Heart right ventricle (tissue), 16 donors: ENCODE measurements at regions of chr17 and their contacts with region 1.

Region 1: DNA sequence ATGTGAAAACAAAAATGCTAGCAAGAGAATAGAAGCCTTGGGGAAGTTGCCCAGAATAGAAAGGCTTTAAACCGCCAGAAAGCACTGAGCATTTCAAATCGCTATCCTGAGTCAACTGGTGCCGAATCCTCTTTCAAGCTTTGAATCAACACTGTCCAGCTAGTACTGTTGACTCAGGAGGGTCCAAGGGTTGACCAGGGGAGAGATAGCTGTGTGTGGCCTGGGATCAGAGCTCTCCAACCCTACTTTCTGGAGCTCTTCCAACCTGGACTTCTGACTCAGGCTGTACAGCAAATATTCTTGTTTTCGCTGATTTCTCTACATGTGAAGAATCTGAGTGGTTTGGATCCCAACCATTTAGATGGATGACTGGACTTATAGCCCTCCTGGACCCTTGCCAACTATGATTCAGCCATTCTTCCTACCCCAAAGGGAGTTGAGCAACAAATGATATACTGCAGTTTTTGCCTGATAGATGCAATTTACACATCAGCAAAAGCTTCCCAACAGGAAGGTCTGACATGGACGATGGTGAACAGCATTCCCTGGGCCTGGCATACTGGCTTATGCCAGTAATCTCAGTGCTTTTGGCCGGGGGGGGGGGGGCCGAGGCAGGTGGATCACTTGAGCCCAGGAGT is 154.0 kb upstream of the SDK2 start:
- DNase-seq: no peak
- ATAC-seq: peak in 1 of 8 donors; percentile 65
- H3K4me3 ChIP-seq: no peak overlapping the region
- H3K27ac ChIP-seq: no peak overlapping the region
- H3K4me1 ChIP-seq: peaks cover 0 to 28% (median 10%) of the 10 kb centered on the region in 9 donors
- H3K27me3 ChIP-seq: peaks cover 0 to 11% (median 0%) of the 10 kb centered on the region in 7 donors
- CTCF ChIP-seq: no peak

Region 2: DNA sequence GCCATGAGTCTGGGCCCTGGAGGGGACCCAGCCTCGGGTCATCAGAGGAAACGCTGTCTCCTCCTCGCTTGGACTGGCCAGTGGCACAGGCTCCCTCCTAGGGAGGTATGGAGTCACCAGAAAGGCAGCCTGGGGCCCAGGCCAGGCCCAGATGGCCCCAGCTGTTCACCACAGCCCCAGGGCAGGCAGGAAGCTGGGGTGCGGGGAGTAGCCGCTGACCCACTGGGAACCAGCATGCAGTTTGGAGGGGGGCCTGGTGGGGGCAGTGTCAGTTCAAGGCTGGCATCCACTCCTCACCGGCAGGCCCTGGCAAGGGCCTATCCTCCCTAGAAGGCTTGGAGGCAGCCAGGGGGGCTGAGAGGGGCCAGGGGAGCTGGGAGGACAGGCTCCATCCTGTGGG is 202.8 kb before region 1 on chr17:
- intact Hi-C with region 1: loop called in 1 of 10 experiments (anchors 10 kb)
- DNase-seq: peak; percentile 17 to 54
- ATAC-seq: peak; percentile 55 to 90 (median 69)
- H3K4me3 ChIP-seq: no peak overlapping the region
- H3K27ac ChIP-seq: no peak overlapping the region
- H3K4me1 ChIP-seq: peaks cover 0 to 34% (median 5%) of the 10 kb centered on the region in 9 donors
- H3K27me3 ChIP-seq: peaks cover 0 to 4% (median 0%) of the 10 kb centered on the region in 7 donors
- CTCF ChIP-seq: peak in 8 of 9 donors; percentile 8 to 55 (median 44)